ENCODE measurements at regions of chr4 and their contacts with region 1.

Region 1: GRCh38 chr4:10157478-10158332 is 41.1 kb upstream of the WDR1 start:
- DNase-seq: peak; percentile 55
- ATAC-seq: peak; percentile 89
- H3K4me3 Mint-ChIP-seq: no peak overlapping the region
- H3K27ac Mint-ChIP-seq: no peak overlapping the region
- H3K4me1 Mint-ChIP-seq: peaks cover 6% of the 10 kb centered on the region
- H3K27me3 Mint-ChIP-seq: peaks cover 17% of the 10 kb centered on the region
- CTCF ChIP-seq: peak; percentile 46; the same call in 1 of the 2 replicates

Region 2: DNA sequence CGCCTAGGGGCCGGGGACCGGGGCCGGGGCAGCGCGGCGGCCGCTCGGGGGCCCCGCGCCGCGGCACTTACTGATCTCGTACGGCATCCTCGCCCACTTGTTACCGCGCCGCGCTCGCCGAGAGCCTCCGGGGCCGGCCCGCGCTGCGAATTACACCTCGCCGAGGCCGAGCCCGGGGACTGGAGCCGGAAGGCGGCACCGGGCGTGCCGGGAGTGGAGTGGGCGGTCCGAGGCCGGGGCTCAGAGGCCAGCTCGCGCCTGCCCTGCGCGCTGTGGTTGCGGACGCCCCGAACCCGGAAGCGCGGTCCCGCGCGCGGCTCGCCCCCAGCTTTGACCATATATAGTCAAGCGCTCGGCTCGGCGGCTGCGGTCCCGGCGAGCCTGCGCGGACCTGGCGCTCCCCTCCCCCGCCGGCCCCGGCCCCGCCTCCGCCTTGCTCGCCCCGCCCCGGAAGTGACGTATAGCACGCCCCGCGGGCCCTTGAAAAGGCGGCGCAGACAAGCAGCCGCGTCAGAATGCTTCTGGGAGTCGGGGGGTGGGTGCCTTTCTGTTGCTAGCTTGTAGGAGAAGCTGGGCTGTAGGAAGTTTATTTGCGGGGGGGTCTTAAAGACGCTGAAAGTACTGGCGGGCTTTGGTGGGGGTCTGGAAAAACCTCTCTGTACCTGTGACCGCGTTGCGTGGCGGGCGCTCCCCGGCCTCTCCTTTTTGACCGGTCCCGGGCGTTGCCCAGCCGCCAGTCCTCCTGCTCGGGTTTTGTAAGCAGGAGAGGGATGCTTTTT is 40.9 kb before region 1 on chr4 and contains the start of gene WDR1:
- CTCF ChIA-PET with region 1: interaction called, 9 read pairs
- POLR2A ChIA-PET with region 1: interaction called, 10 read pairs
- DNase-seq: peak; percentile 95
- ATAC-seq: peak; percentile 84
- H3K4me3 Mint-ChIP-seq: peak within 1 kb of the TSS; percentile 85
- H3K27ac Mint-ChIP-seq: peak within 1 kb of the TSS; percentile 97
- H3K4me1 Mint-ChIP-seq: peaks cover 66% of the 10 kb centered on the region
- H3K27me3 Mint-ChIP-seq: no peaks in the 10 kb centered on the region
- CTCF ChIP-seq: no peak
- total RNA-seq, gene WDR1: 288 to 306 TPM (median 288 TPM) in 3 replicates

Region 3: GRCh38 chr4:10140866-10141759 is 16.6 kb before region 1 on chr4:
- CTCF ChIA-PET with region 1: interaction called, 58 read pairs
- POLR2A ChIA-PET with region 1: no interaction called
- DNase-seq: peak; percentile 59
- ATAC-seq: peak; percentile 93
- H3K4me3 Mint-ChIP-seq: no peak overlapping the region
- H3K27ac Mint-ChIP-seq: no peak overlapping the region
- H3K4me1 Mint-ChIP-seq: peaks cover 5% of the 10 kb centered on the region
- H3K27me3 Mint-ChIP-seq: 0 out of 2 replicates have a peak, but pooled peaks cover 3% of the 10 kb centered on the region
- CTCF ChIP-seq: no peak

Region 4: DNA sequence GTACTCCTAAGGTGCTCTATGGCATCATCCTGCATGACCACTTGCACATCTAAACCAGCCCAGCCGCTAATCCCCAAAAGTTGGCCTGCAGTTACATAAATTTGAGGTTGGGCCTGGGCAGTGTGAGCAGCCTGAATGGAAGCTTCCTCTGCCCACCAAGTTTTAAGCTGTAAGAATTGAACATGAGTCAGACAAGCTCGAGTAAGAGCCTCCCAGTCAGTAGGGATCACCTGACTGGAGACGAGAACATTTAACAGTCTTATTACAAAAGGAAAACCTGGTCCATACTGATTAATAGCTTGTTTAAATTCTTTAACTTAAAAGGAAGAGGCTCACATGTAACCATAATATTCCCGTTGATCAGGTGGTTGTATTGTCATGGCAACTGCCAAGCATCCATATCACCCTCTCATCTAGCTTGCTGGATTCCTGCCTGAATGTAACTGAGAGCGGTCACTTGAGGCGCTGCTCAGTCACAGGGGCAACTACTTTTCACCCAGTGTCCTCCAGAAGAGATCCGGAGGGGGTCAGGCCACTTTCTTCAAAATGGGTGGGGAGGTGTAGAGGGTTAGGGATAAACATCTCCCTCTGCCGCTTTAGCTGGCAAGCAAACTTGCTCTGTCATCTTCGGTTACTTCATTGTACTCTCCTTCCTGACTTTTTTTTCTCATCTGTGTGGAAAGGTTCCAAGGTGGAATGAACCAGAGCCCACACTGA is 15.5 kb after region 1 on chr4:
- CTCF ChIA-PET with region 1: interaction called, 18 read pairs
- POLR2A ChIA-PET with region 1: no interaction called
- DNase-seq: no peak
- ATAC-seq: peak; percentile 34; the same call in 1 of the 2 replicates
- H3K4me3 Mint-ChIP-seq: no peak overlapping the region
- H3K27ac Mint-ChIP-seq: no peak overlapping the region
- H3K4me1 Mint-ChIP-seq: peaks cover 16% of the 10 kb centered on the region
- H3K27me3 Mint-ChIP-seq: peaks cover 6% of the 10 kb centered on the region
- CTCF ChIP-seq: no peak

Region 5: GRCh38 chr4:10403633-10404445 is 246.1 kb after region 1 on chr4:
- CTCF ChIA-PET with region 1: interaction called, 32 read pairs
- POLR2A ChIA-PET with region 1: no interaction called
- DNase-seq: no peak
- ATAC-seq: peak; percentile 80
- H3K4me3 Mint-ChIP-seq: no peak overlapping the region
- H3K27ac Mint-ChIP-seq: 0 out of 2 replicates have a peak overlapping the region, but pooled peaks have one; percentile 51
- H3K4me1 Mint-ChIP-seq: peaks cover 9% of the 10 kb centered on the region
- H3K27me3 Mint-ChIP-seq: no peaks in the 10 kb centered on the region
- CTCF ChIP-seq: no peak

Region 6: DNA sequence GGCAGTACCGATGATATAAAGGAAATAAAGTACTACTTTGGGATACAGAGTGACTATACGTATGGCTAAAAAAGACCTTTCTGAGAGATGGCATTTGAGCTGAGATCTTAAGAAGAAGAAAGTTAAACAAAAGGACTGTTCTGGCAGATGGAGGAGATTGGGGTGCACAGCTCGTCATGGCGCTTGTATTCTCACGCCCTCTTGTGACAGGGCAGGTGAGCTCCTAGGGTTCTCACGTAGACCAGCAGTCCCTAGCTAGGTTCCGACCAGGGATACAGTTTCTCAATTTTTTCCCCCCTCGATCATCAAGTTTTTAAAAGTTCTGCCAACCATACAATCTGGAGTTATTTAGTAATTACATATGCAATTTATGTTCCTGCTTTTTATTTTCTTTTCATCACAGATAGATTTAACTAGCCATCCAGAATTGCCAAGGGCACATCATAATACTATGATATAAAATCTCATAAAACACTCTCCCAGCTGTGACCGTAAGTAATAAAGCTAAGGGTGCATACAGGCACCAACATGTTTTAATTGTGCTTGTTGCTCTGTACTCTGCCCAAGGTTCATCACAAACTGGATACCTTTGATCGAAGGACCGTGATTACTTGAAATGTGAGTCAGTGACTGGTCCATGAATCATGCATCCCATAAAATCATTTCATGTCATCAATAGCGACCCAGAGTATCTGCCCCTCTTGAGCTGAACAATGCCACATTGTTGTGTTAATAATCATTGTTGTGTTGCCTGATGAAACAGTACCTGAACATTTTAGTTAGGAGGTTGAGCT is 368.9 kb after region 1 on chr4:
- CTCF ChIA-PET with region 1: interaction called, 22 read pairs
- POLR2A ChIA-PET with region 1: no interaction called
- DNase-seq: peak; percentile 27
- ATAC-seq: peak; percentile 92
- H3K4me3 Mint-ChIP-seq: no peak overlapping the region
- H3K27ac Mint-ChIP-seq: no peak overlapping the region
- H3K4me1 Mint-ChIP-seq: peaks cover 11% of the 10 kb centered on the region
- H3K27me3 Mint-ChIP-seq: no peaks in the 10 kb centered on the region; the same call in 1 of the 2 replicates
- CTCF ChIP-seq: no peak

Region 7: GRCh38 chr4:10535912-10536311 is 378.2 kb after region 1 on chr4:
- CTCF ChIA-PET with region 1: interaction called, 13 read pairs
- POLR2A ChIA-PET with region 1: no interaction called
- DNase-seq: no peak
- ATAC-seq: no peak
- H3K4me3 Mint-ChIP-seq: no peak overlapping the region
- H3K27ac Mint-ChIP-seq: no peak overlapping the region
- H3K4me1 Mint-ChIP-seq: peaks cover 12% of the 10 kb centered on the region
- H3K27me3 Mint-ChIP-seq: no peaks in the 10 kb centered on the region
- CTCF ChIP-seq: no peak

Measured in WTC11 (cell line).